ENCODE measurements at regions of chr9 and their contacts with region 1.

Region 1: DNA sequence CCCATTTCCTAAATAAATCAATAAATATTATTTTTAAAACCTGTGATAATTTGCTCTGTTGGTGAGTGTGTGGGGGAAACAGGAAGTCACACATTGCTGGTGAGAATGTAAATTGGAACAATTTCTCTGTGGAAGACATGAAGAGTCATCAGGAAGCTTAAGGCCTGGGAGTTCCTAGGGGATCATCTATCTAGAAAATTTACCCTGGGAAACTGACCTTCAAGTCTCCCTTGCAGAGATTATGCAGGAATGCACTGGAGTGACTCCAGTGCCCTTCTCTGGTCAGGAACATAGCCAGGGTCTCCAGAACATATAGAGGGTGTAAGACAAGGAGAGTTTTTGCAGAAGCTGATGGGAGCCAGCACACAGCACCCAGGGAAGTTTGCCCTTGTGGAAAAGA is 13.0 kb upstream of the GCNT1 start:
- DNase-seq: no peak
- ATAC-seq: no peak
- H3K4me3 ChIP-seq: no peak overlapping the region
- H3K27ac ChIP-seq: no peak overlapping the region
- H3K4me1 ChIP-seq: no peaks in the 10 kb centered on the region
- H3K27me3 ChIP-seq: no peaks in the 10 kb centered on the region
- CTCF ChIP-seq: no peak
- POLR2A ChIP-seq: no peak

Region 2: DNA sequence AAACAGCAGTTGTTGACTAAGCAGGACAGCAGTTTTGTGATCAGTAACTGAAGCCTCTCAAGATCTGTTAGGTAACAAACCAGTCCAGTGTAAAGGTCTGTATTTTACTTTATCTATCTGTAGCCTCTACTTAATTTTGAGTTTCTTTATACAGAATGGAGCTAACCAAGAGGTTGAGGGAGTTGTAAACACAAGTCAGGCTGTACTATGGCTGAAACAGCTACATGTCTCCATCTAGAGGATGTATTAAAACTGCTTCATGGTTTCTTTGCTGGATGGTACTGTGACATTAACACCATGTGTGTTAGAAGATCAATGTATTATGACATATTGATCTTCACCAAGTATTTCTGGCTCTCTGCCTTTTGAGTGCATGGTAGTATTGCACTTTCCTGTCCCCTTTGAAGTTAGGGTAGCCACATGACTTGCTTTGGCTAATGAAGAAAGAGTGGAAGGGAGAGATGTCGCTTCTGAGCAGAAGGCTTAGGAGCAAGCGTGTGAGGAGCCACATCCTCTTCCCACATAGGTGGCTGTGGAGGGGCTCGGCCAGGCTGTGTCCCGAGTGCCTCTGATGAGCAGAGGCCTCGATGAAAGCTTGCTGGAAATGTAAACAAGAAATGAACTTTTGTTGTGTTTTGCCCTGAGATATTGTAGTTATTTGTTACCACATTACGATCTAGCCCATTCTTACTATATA is 212.7 kb after region 1 on chr9:
- intact Hi-C with region 1: loop called in 1 of 2 experiments (anchors 5 kb)
- DNase-seq: no peak
- ATAC-seq: peak; percentile 73 to 93 (median 87)
- H3K4me3 ChIP-seq: no peak overlapping the region
- H3K27ac ChIP-seq: no peak overlapping the region
- H3K4me1 ChIP-seq: no peaks in the 10 kb centered on the region
- H3K27me3 ChIP-seq: no peaks in the 10 kb centered on the region
- CTCF ChIP-seq: peak; percentile 45 to 60 (median 54)
- POLR2A ChIP-seq: no peak

Region 3: DNA sequence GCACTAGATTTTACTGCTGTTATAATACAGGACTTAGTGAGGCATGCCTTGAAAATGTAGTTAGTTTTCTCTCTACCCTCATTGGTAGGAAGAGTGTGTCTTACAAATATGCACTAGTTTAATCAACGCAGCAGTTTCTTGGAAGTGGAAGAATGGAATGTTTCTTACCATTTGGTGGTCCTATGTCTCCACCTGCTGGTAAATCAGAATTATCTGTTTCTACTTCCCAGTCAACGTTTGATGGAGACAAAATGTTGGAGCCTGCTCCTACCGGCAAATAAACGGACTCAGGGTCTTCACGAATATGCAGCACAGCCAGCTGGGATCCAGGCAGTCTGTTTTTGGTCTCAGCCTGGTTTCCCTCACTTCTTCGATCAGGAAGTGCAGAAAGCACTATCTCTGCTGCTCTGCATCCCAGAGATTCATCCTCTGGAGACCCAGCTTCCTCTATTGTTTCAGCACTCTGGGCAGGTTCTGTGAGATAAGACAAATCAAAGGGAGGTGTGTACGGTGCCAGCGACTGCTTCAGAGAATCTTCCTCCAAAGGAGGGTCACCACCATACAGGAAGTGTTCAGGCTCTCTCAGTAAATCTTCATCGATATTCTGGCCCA is 258.7 kb after region 1 on chr9:
- intact Hi-C with region 1: loop called in 1 of 2 experiments (anchors 5 kb)
- DNase-seq: no peak
- ATAC-seq: peak; percentile 77 to 83 (median 80)
- H3K4me3 ChIP-seq: peak overlapping the region in 1 of 3 donors; percentile 16
- H3K27ac ChIP-seq: peak overlapping the region in 1 of 3 donors; percentile 49
- H3K4me1 ChIP-seq: no peaks in the 10 kb centered on the region
- H3K27me3 ChIP-seq: no peaks in the 10 kb centered on the region
- CTCF ChIP-seq: peak; percentile 59 to 77 (median 69)
- POLR2A ChIP-seq: no peak